Spleen (tissue), 13 donors: ENCODE measurements at regions of chr1 and their contacts with region 1.

Region 1: DNA sequence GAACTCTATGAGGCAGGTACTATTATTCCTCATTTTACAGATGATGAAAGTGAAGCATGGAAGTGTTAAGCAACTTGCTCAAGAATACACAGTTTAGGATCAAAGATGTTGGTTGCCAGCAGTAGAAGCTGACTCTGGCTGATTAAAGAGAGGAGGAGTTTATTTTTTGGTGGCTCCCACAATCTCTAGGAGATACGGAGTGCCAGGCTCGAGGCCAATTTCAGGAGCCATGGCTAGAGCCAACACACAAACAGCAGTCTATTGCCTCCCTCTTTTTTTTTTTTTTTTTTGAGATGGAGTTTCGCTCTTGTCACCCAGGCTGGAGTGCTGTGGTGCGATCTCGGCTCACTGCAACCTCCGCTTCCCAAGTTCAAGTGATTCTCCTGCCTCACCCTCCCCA is 19.6 kb downstream of the TTF2 start:
- DNase-seq: no peak
- H3K4me3 ChIP-seq: no peak overlapping the region
- H3K27ac ChIP-seq: no peak overlapping the region
- H3K4me1 ChIP-seq: no peaks in the 10 kb centered on the region
- H3K27me3 ChIP-seq: no peaks in the 10 kb centered on the region
- CTCF ChIP-seq: no peak
- POLR2A ChIP-seq: no peak

Region 2: DNA sequence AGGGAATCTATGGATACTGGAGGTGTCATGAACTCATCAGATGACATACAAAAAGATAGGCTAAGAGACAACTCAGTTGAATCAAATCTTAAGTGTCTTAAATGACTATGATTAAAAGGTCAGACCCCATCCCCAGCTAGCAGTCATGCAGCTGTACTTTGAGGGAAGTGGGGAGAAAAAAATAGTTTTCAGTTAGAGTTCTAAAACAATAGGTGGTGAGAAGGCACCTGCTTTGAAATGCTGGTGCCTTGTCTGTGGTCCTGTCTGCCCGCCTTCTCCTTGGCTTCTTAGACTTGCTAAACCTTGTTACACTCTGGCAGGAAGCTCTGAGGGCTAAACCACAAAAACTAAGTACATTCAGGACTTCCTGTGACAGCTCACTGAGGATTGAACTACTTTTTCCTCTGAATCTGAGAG is 310.2 kb before region 1 on chr1:
- intact Hi-C with region 1: no loop called
- DNase-seq: no peak
- H3K4me3 ChIP-seq: peak overlapping the region in 1 of 8 donors; percentile 10
- H3K27ac ChIP-seq: peak overlapping the region in 7 of 8 donors; percentile 30 to 82 (median 68)
- H3K4me1 ChIP-seq: peaks cover 0 to 83% (median 48%) of the 10 kb centered on the region in 6 donors
- H3K27me3 ChIP-seq: no peaks in the 10 kb centered on the region
- CTCF ChIP-seq: no peak
- POLR2A ChIP-seq: no peak

Region 3: GRCh38 chr1:116909510-116910378 is 170.0 kb before region 1 on chr1 and contains the start of gene PTGFRN:
- intact Hi-C with region 1: no loop called
- DNase-seq: peak; percentile 77
- H3K4me3 ChIP-seq: peak within 1 kb of the TSS; percentile 46 to 77 (median 54)
- H3K27ac ChIP-seq: peak within 1 kb of the TSS in 5 of 8 donors; percentile 21 to 40 (median 34)
- H3K4me1 ChIP-seq: peaks cover 0 to 23% (median 15%) of the 10 kb centered on the region in 6 donors
- H3K27me3 ChIP-seq: peaks cover 0 to 44% (median 11%) of the 10 kb centered on the region in 7 donors
- CTCF ChIP-seq: no peak
- POLR2A ChIP-seq: no peak
- total RNA-seq, gene PTGFRN: 5.3 to 17.4 (median 11.9) TPM

Region 4: GRCh38 chr1:117188170-117188815 is 108.6 kb after region 1 on chr1:
- intact Hi-C with region 1: no loop called
- DNase-seq: no peak
- H3K4me3 ChIP-seq: no peak overlapping the region
- H3K27ac ChIP-seq: no peak overlapping the region
- H3K4me1 ChIP-seq: no peaks in the 10 kb centered on the region
- H3K27me3 ChIP-seq: no peaks in the 10 kb centered on the region
- CTCF ChIP-seq: no peak
- POLR2A ChIP-seq: no peak

Region 5: GRCh38 chr1:117895482-117896114 is 815.9 kb after region 1 on chr1:
- intact Hi-C with region 1: loop called (anchors 10 kb)
- DNase-seq: no peak
- H3K4me3 ChIP-seq: no peak overlapping the region
- H3K27ac ChIP-seq: no peak overlapping the region
- H3K4me1 ChIP-seq: no peaks in the 10 kb centered on the region
- H3K27me3 ChIP-seq: no peaks in the 10 kb centered on the region
- CTCF ChIP-seq: peak in 9 of 11 experiments; percentile 29 to 69 (median 60)
- POLR2A ChIP-seq: no peak